HAP-1 (cell line): ENCODE measurements at regions of chr6 and their contacts with region 1.

Region 1: GRCh38 chr6:24855395-24856245 is 56.9 kb upstream of the ARMH2 start:
- DNase-seq: peak; percentile 71 to 82
- H3K4me3 ChIP-seq: no peak overlapping the region
- H3K4me1 ChIP-seq: no peaks in the 10 kb centered on the region
- H3K27me3 ChIP-seq: no peaks in the 10 kb centered on the region

Region 2: GRCh38 chr6:24991810-24992467 is 136.3 kb after region 1 on chr6:
- in situ Hi-C with region 1: loop called (anchors 25 kb)
- DNase-seq: peak; percentile 55 to 71
- H3K4me3 ChIP-seq: no peak overlapping the region
- H3K4me1 ChIP-seq: peaks cover 17% of the 10 kb centered on the region
- H3K27me3 ChIP-seq: no peaks in the 10 kb centered on the region

Region 3: GRCh38 chr6:25070547-25071366 is 215.1 kb after region 1 on chr6:
- in situ Hi-C with region 1: loop called (anchors 25 kb)
- DNase-seq: peak; percentile 65 to 81
- H3K4me3 ChIP-seq: no peak overlapping the region
- H3K4me1 ChIP-seq: no peaks in the 10 kb centered on the region
- H3K27me3 ChIP-seq: no peaks in the 10 kb centered on the region